ENCODE measurements at regions of chr15 and their contacts with region 1.

Region 1: DNA sequence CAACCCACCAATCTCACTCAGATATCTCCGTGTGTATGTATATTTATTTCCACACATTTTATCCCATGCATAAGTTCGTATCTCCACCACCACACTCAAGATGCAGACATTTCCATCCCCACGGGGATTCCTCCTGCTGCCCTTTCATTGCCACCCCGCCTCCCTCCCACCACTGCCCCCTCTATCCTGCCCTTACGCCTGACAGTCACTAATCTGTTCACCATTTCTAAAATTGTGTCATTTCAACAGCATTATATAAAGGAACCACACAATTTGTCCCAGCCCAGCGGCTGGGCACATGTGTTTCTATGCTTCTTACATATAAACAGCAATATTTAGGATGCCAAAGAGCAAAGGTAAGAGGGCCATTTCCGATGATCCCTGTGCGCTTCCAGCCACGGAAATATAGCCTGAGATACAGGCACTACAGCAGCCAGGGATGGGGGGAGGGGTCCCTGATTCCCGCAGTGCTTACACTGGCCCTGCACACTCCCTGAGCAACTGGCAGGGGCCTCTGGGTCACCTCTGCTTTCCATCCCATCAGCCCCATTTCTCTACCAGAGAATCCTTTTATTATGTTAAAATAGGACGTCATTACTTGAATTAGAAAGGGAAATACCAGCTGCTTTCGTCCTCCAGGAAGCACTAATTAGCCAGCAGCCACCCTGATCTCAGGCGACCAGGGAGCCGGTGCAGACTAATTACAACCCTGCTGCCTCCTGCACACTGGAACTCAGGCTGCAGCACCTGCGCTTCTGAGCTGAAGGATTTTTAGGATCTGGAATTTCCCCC is 372.0 kb upstream of the ATP10A start:
- DNase-seq: no peak
- ATAC-seq: no peak
- H3K4me3 ChIP-seq: no peak overlapping the region
- H3K27ac ChIP-seq: no peak overlapping the region
- H3K4me1 ChIP-seq: no peaks in the 10 kb centered on the region
- H3K27me3 ChIP-seq: no peaks in the 10 kb centered on the region
- CTCF ChIP-seq: no peak
- POLR2A ChIP-seq: no peak
- RAD21 ChIP-seq: no peak

Region 2: GRCh38 chr15:26179906-26180305 is 55.3 kb before region 1 on chr15:
- CTCF ChIA-PET with region 1: no interaction called
- POLR2A ChIA-PET with region 1: no interaction called
- dilution Hi-C with region 1: no loop called
- in situ Hi-C with region 1: loop called (anchors 10 kb)
- intact Hi-C with region 1: no loop called
- DNase-seq: no peak
- ATAC-seq: no peak
- H3K4me3 ChIP-seq: no peak overlapping the region
- H3K27ac ChIP-seq: no peak overlapping the region
- H3K4me1 ChIP-seq: no peaks in the 10 kb centered on the region
- H3K27me3 ChIP-seq: no peaks in the 10 kb centered on the region
- CTCF ChIP-seq: no peak
- POLR2A ChIP-seq: no peak
- RAD21 ChIP-seq: no peak

Measured in IMR-90 (cell line).